Motor neuron (in vitro differentiated cells): ENCODE measurements at regions of chr4 and their contacts with region 1.

Region 1: GRCh38 chr4:41177016-41177415 is 37.3 kb downstream of the APBB2 start:
- ATAC-seq: peak in 2 of 8 experiments; percentile 61 to 74
- H3K4me3 ChIP-seq: no peak overlapping the region
- H3K27ac ChIP-seq: no peak overlapping the region
- H3K4me1 ChIP-seq: peaks cover 0 to 8% of the 10 kb centered on the region in 2 donors

Region 2: DNA sequence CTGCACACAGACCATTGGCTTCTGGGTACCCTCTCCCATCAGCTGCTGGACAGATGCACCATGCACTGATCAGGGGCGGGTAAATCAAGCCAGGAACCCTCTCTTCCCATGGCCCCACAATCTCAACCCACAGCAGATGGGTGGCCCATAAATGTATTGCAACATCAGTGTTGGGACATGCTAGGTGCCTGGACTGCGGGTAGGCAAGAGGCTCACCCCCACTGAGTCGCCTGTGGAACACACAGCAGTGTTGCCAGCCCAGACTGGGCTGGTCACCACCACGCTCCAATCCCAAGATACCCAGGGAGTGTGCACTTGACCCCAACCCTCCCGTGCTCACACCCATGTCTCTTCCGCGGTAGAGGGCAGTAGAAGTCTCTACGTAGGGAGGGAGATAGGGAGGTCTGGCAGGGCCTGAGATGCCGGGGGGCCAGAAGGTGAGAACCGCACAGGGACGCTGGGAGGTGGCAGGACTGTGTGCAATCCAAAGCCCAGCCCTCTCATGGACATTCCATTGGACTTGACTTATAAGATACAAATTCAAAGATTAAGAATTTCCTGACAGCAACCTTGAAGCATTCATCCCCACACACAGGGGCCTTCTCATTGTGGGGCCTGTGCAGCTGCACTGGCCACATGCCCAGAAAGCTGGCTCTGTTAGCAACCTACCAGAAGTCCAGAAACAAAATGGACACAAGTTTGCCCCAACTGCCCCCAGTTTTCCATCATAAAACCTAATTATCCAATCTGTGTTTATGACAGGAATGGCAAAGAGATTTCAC is 243.6 kb before region 1 on chr4:
- in situ Hi-C with region 1: loop called in 1 of 9 experiments (anchors 25 kb)
- ATAC-seq: peak in 3 of 8 experiments; percentile 18 to 75 (median 32)
- H3K4me3 ChIP-seq: no peak overlapping the region
- H3K27ac ChIP-seq: no peak overlapping the region
- H3K4me1 ChIP-seq: peaks cover 0 to 5% of the 10 kb centered on the region in 2 donors